K562 (cell line): ENCODE measurements at regions of chr5 and their contacts with region 1.

Region 1: DNA sequence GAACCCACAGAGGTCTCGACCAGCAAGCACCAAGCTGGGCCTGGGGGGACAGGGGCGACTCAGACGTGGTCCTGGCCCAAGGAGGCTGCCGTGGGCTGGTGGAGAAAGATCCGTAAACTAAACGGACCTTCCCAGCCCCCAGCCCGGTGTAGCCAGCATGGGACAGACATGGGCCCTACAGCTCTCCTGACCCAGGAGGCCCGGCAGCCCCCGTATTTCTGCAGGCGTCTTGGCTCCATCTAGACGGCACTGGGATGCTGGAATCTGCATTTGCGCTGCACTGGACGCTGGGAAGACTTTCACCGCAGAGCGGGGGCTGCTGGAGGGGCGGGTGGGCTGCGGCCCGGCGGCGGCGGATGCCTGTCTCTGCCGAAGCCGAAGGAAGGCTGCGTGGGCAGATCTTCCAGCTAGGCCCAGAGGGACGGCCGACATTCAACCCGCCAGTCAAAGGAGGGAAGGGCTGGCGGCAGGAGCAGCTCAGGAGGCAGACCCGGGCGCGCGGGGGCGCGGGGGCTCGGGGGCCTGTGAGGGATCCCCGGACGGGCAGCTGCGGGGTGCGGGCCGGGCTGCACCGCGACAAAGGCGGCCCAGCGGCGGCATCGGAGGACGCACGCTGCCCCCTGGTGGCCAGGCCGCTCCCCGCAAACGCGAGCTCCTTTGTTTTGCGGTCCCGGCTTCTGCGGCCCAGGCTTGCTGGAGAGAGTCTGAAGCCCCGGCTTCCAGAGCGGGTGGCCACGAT is 266.2 kb downstream of the NSG2 start:
- DNase-seq: peak; percentile 65 to 83 (median 78)
- ATAC-seq: peak; percentile 98
- H3K4me3 ChIP-seq: no peak overlapping the region
- H3K27ac ChIP-seq: no peak overlapping the region
- H3K4me1 ChIP-seq: peaks cover 0 to 15% of the 10 kb centered on the region in 2 experiments; a peak in 2 of 5 replicates
- H3K27me3 ChIP-seq: peaks cover 15 to 82% of the 10 kb centered on the region in 2 experiments
- CTCF ChIP-seq: peak; percentile 59 to 83 (median 76)
- EP300 ChIP-seq: no peak
- POLR2A ChIP-seq: no peak
- RAD21 ChIP-seq: peak; percentile 84 to 88

Region 2: DNA sequence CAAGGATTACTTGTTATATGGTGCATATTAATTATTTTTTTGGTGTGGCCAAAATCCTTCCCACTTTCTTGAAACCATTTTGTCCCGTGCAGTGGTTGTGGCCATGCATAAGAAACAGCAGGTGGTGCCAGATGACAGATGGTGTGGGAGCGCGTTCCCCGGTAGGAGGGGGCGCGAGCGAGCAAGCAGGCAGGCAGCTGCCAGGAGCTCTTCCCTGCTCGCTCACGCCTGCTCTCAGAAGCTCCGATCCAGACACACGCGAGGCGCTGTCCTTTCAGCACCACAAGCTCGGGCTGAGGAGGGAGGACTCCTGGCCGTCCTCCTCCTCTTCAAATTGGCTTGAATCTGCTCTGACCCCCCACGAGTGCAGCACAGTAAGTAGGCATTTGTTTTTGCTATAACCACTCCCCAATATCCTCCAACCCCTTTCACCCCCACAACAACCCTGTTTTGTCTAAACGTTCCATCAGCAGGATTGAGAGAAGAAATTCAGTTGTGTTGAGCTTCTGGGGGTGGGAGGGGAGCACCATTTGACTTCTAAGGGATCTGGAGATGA is 266.2 kb before region 1 on chr5 and contains the start of gene NSG2:
- CTCF ChIA-PET with region 1: interaction called, 16 read pairs
- POLR2A ChIA-PET with region 1: interaction called, 3 read pairs
- in situ Hi-C with region 1: loop called (anchors 10 kb)
- intact Hi-C with region 1: loop called (anchors 1 kb)
- DNase-seq: peak; percentile 68 to 85 (median 77)
- ATAC-seq: peak; percentile 100
- H3K4me3 ChIP-seq: no peak within 1 kb of the TSS
- H3K27ac ChIP-seq: no peak within 1 kb of the TSS
- H3K4me1 ChIP-seq: no peaks in the 10 kb centered on the region
- H3K27me3 ChIP-seq: no peaks in the 10 kb centered on the region
- CTCF ChIP-seq: peak; percentile 72 to 97 (median 85)
- EP300 ChIP-seq: no peak
- POLR2A ChIP-seq: no peak
- RAD21 ChIP-seq: peak; percentile 64 to 88
- polyA plus RNA-seq, gene NSG2: not detected